ENCODE measurements at regions of chr18 and their contacts with region 1.

Region 1: DNA sequence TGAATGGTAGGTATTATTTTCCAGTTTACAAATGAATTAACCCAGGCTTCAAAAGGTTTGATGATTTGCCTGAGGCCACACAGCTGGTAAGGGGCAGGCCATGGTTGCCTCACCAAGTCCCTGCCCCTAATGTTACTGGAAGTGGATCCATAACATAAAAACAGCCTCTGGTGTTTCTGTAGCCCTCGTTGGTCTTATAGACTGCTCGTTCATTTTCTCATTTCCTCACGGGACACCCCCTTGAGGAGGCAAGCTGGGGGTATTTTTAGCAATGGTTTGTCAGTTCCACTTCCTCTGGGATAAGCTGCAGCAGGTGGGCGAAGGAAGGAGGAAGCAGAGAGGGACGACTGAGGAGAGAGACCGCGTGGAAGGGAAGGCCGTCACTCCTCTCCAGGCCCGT is 32.9 kb upstream of the NDUFV2 start:
- DNase-seq: no peak
- ATAC-seq: no peak
- H3K4me3 Mint-ChIP-seq: no peak overlapping the region
- H3K27ac Mint-ChIP-seq: peak overlapping the region; percentile 40
- H3K4me1 Mint-ChIP-seq: peaks cover 21% of the 10 kb centered on the region
- H3K27me3 Mint-ChIP-seq: no peaks in the 10 kb centered on the region

Region 2: DNA sequence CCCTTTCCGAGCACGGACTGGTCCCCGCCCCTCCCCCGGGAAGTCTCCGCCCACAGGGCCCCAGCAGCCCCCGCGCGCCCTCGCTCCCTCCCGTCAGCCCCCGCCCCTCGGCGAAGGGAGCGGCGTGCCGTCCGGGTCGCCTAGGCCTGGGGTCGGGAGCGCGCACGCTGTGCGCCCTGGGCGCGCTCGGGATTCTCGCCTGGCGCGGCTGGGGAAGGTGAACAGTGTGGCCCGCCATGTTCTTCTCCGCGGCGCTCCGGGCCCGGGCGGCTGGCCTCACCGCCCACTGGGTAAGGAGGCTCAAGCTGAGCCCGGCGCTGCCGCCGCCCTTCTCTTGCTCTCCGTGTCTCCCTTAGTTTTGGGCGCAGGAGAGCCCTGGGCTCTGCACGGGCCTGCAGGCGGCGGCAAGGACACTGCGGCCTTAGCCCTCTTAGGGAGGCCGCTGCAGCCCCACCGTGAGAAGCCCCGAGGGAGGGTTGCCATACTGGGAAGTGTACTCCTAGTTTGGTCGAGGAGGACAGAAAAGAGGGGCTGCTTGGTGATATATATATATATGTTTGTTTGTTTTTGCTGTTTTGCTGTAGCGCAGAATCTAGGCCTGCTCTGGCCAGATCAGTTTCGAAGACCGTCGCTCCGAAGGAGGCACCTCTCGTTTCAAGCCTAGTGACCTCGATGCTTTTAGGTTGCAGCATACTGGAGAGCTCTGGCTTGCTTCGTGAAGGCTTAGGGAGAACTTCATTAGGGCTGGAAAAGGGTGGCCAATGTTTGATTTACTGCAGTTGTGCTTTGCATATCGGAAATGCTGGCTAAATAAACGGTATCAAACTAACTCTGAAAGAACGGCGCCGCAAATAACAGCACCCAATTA is 33.1 kb after region 1 on chr18 and contains the start of gene NDUFV2:
- CTCF ChIA-PET with region 1: interaction called, 14 read pairs
- POLR2A ChIA-PET with region 1: interaction called, 4 read pairs
- intact Hi-C with region 1: no loop called
- DNase-seq: peak; percentile 99
- ATAC-seq: peak; percentile 88
- H3K4me3 Mint-ChIP-seq: peak within 1 kb of the TSS; percentile 89
- H3K27ac Mint-ChIP-seq: peak within 1 kb of the TSS; percentile 97
- H3K4me1 Mint-ChIP-seq: peaks cover 40% of the 10 kb centered on the region
- H3K27me3 Mint-ChIP-seq: no peaks in the 10 kb centered on the region
- total RNA-seq, gene NDUFV2: 331 to 372 TPM

Region 3: GRCh38 chr18:9117980-9118841 is 48.6 kb after region 1 on chr18:
- CTCF ChIA-PET with region 1: interaction called, 17 read pairs
- POLR2A ChIA-PET with region 1: interaction called, 4 read pairs
- intact Hi-C with region 1: no loop called
- DNase-seq: no peak
- ATAC-seq: peak; percentile 51
- H3K4me3 Mint-ChIP-seq: peak overlapping the region; percentile 66
- H3K27ac Mint-ChIP-seq: peak overlapping the region; percentile 99
- H3K4me1 Mint-ChIP-seq: peaks cover 80% of the 10 kb centered on the region
- H3K27me3 Mint-ChIP-seq: no peaks in the 10 kb centered on the region

Region 4: GRCh38 chr18:9404565-9405060 is 335.0 kb after region 1 on chr18:
- CTCF ChIA-PET with region 1: interaction called, 3 read pairs
- POLR2A ChIA-PET with region 1: no interaction called
- intact Hi-C with region 1: loop called in 1 of 2 experiments (anchors 5 kb)
- DNase-seq: peak; percentile 57
- ATAC-seq: peak; percentile 87
- H3K4me3 Mint-ChIP-seq: peak overlapping the region; percentile 70
- H3K27ac Mint-ChIP-seq: peak overlapping the region; percentile 82
- H3K4me1 Mint-ChIP-seq: peaks cover 13% of the 10 kb centered on the region
- H3K27me3 Mint-ChIP-seq: no peaks in the 10 kb centered on the region

Measured in activated CD4-positive, alpha-beta T cell treated with anti-CD3 and anti-CD28 coated beads for 36 hours (primary cell).